Naive thymus-derived CD4-positive, alpha-beta T cell (primary cell): ENCODE measurements at regions of chr12 and their contacts with region 1.

Region 1: GRCh38 chr12:56041552-56042429 is at the start of gene RPS26:
- DNase-seq: peak; percentile 75 to 97 (median 94)
- ATAC-seq: peak; percentile 94
- H3K4me3 ChIP-seq: peak within 1 kb of the TSS; percentile 100
- H3K4me3 Mint-ChIP-seq: peak within 1 kb of the TSS; percentile 91 to 100 (median 98)
- H3K27ac ChIP-seq: peak within 1 kb of the TSS; percentile 84
- H3K27ac Mint-ChIP-seq: peak within 1 kb of the TSS; percentile 94 to 99 (median 97)
- H3K4me1 ChIP-seq: peaks cover 16 to 19% of the 10 kb centered on the region in 2 donors
- H3K4me1 Mint-ChIP-seq: peaks cover 14 to 56% (median 34%) of the 10 kb centered on the region in 7 donors
- H3K27me3 ChIP-seq: no peaks in the 10 kb centered on the region
- H3K27me3 Mint-ChIP-seq: no peaks in the 10 kb centered on the region
- total RNA-seq, gene RPS26: 40.8 to 64.5 (median 46.4) TPM

Region 2: DNA sequence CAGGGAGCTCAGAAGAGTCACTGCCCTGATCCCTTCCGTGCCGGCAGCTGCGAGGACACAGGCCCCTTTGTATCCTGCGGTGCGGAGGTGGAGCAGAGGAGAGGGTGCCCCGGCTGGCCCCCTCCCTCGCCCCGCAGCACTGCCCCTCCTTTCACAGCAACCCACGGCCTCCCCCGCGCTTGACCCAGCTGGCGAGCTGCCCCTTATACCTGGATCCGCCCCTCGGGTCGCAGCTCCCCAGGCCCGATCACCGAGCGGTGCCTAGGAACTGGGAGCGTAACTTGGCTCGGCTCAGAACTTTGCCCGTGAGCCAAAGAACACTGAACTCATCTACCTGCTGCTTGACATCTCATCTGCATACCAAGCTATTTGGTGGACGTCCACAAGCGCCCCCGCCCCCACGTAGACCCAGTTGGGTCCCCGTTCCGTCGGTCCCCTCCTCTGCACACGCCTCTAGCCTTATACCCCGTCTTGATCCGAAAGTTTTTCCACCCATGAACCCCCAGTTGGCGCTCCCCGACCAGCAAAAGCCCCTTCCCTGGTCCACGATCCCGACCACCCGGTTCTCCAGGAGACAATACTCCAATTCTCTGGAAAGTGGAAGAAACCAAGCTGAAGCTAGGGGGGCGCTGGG is 211.7 kb before region 1 on chr12:
- CTCF ChIA-PET with region 1: no interaction called
- POLR2A ChIA-PET with region 1: no interaction called
- intact Hi-C with region 1: loop called (anchors 1 kb)
- DNase-seq: peak in 5 of 9 donors; percentile 16 to 44 (median 20)
- ATAC-seq: peak; percentile 2
- H3K4me3 ChIP-seq: peak overlapping the region; percentile 99
- H3K4me3 Mint-ChIP-seq: peak overlapping the region; percentile 88 to 99 (median 99)
- H3K27ac ChIP-seq: peak overlapping the region; percentile 84
- H3K27ac Mint-ChIP-seq: peak overlapping the region; percentile 85 to 98 (median 95)
- H3K4me1 ChIP-seq: peaks cover 37 to 40% of the 10 kb centered on the region in 2 donors
- H3K4me1 Mint-ChIP-seq: peaks cover 42 to 69% (median 53%) of the 10 kb centered on the region in 7 donors
- H3K27me3 ChIP-seq: no peaks in the 10 kb centered on the region
- H3K27me3 Mint-ChIP-seq: no peaks in the 10 kb centered on the region

Region 3: DNA sequence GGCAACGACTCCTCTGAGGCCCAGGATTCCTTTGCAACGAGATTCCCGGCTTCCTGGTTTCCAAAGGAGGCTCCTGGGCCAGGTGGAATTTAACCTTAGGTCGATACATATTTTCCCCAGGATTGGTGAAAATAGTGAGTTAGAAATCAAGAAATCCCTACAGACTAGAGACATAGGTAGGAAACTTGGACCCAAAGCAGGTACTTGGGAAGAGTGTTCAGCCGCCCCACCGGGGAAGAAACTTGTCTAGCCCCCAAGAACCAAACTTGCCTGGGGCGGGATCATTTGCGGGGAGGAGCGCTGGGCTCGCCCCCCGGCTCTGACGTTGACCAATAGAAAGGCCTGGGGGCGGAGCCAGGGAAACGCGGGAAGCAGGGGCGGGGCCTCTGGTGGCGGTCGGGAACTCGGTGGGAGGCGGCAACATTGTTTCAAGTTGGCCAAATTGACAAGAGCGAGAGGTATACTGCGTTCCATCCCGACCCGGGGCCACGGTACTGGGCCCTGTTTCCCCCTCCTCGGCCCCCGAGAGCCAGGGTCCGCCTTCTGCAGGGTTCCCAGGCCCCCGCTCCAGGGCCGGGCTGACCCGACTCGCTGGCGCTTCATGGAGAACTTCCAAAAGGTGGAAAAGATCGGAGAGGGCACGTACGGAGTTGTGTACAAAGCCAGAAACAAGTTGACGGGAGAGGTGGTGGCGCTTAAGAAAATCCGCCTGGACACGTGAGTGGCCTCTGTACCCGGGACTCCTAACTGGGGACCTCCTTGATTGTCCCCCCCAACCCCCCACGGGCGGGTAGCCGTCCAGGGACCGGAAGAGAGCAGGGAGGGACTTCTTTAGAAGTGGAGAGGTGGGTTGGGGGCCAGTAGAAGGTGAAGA is 75.1 kb before region 1 on chr12 and contains the start of gene CDK2:
- CTCF ChIA-PET with region 1: no interaction called
- POLR2A ChIA-PET with region 1: no interaction called
- intact Hi-C with region 1: no loop called
- DNase-seq: peak; percentile 70 to 95 (median 79)
- ATAC-seq: peak; percentile 99
- H3K4me3 ChIP-seq: peak within 1 kb of the TSS; percentile 73
- H3K4me3 Mint-ChIP-seq: peak within 1 kb of the TSS; percentile 88 to 97 (median 92)
- H3K27ac ChIP-seq: peak within 1 kb of the TSS; percentile 69
- H3K27ac Mint-ChIP-seq: peak within 1 kb of the TSS; percentile 61 to 94 (median 86)
- H3K4me1 ChIP-seq: peaks cover 12 to 18% of the 10 kb centered on the region in 2 donors
- H3K4me1 Mint-ChIP-seq: peaks cover 19 to 51% (median 33%) of the 10 kb centered on the region in 7 donors
- H3K27me3 ChIP-seq: no peaks in the 10 kb centered on the region
- H3K27me3 Mint-ChIP-seq: no peaks in the 10 kb centered on the region
- total RNA-seq, gene CDK2: 19.0 to 77.2 (median 24.1) TPM

Region 4: DNA sequence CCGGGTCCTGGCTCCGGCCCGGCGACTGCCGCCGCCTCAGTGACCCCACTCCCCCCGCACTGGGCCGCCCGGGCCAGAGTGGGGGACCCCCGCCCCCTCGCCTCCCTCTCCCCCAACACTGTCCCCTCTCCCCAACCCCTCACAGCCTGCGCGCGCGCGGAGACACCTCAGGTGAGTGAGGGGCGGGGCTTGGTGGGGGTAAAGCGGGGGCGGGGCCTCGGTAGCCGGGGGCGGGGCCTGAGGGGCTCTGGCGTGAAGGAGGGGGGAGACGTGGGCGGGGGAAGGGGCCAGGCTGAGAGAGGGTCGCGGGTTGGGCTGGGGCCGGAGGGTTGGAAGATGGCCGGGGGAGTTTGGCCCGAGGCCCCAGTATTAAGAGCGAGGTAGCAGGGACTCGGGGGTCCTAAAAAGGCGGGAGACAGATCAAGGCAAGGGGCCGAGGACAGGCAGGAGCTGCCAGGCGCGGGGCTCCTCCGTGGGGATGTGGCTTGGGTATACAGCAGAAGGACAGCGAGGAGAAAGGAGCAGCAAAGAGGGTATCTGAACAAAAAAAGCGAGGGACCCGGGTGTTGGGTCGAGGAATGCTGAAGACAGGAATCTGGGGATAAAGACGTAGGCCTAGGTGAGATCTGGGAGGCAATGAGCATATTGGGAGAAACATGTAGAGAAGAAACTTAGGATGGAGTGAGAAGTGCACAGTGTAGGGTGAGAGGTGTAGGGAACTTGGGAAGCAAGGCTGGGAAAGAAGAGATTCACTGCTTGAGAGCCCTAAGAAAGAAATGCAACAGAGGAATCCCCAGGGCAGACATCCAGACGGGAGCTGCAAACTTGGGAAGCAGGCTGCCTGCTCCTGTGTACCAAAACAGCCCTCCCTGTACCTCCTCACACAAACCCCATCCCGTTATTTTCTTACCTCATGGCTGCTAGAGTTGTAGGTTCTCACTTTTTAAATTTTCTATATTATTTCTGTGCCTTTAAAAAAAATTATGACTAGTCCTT is 33.9 kb before region 1 on chr12:
- CTCF ChIA-PET with region 1: no interaction called
- POLR2A ChIA-PET with region 1: interaction called, 6 read pairs
- intact Hi-C with region 1: loop called in 1 of 2 experiments (anchors 2 kb)
- DNase-seq: peak; percentile 38 to 72 (median 63)
- ATAC-seq: peak; percentile 91
- H3K4me3 ChIP-seq: peak overlapping the region; percentile 57
- H3K4me3 Mint-ChIP-seq: peak overlapping the region; percentile 80 to 94 (median 88)
- H3K27ac ChIP-seq: peak overlapping the region; percentile 69
- H3K27ac Mint-ChIP-seq: peak overlapping the region; percentile 20 to 92 (median 84)
- H3K4me1 ChIP-seq: peaks cover 10% of the 10 kb centered on the region in 2 donors
- H3K4me1 Mint-ChIP-seq: peaks cover 16 to 35% (median 29%) of the 10 kb centered on the region in 7 donors
- H3K27me3 ChIP-seq: no peaks in the 10 kb centered on the region
- H3K27me3 Mint-ChIP-seq: no peaks in the 10 kb centered on the region

Region 5: GRCh38 chr12:56078990-56079664 is 37.3 kb after region 1 on chr12:
- CTCF ChIA-PET with region 1: interaction called, 3 read pairs
- POLR2A ChIA-PET with region 1: interaction called, 3 read pairs
- intact Hi-C with region 1: loop called in 1 of 2 experiments (anchors 2 kb)
- DNase-seq: peak in 8 of 9 donors; percentile 20 to 66 (median 40)
- ATAC-seq: peak; percentile 74
- H3K4me3 ChIP-seq: peak overlapping the region; percentile 68
- H3K4me3 Mint-ChIP-seq: peak overlapping the region; percentile 80 to 91 (median 86)
- H3K27ac ChIP-seq: no peak overlapping the region
- H3K27ac Mint-ChIP-seq: peak overlapping the region in 4 of 9 donors; percentile 28 to 73 (median 50)
- H3K4me1 ChIP-seq: peaks cover 5 to 10% of the 10 kb centered on the region in 2 donors
- H3K4me1 Mint-ChIP-seq: peaks cover 0 to 16% (median 10%) of the 10 kb centered on the region in 7 donors
- H3K27me3 ChIP-seq: no peaks in the 10 kb centered on the region
- H3K27me3 Mint-ChIP-seq: peaks cover 0 to 51% (median 8%) of the 10 kb centered on the region in 5 donors

Region 6: DNA sequence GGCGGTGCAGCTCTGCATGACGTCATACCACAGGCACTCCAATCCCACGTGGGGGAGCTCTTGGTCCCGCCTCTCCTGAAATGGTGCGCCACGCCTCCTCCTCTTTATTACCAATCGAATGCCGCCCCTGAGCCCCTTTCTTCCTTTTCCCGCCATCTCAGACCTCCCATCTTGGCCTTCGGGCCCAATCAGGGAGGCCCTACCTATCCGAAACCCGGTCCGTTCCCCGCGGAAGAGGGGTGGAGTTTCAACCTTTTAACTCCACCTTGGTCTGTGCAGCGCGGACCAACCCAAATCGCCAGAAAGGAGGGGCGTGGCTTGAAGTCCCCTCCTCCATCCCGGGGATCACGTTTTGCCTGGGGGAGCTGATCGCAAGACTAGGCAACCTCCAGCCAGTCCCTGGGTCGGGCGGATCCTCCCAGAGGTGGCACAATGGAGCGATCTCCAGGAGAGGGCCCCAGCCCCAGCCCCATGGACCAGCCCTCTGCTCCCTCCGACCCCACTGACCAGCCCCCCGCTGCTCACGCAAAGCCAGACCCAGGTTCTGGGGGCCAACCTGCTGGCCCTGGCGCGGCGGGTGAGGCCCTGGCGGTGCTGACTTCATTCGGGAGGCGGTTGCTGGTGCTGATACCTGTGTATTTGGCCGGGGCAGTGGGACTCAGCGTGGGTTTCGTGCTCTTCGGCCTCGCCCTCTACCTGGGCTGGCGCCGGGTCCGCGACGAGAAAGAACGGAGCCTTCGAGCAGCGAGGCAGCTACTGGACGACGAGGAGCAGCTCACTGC is 86.3 kb after region 1 on chr12 and contains the start of gene ESYT1:
- CTCF ChIA-PET with region 1: interaction called, 5 read pairs
- POLR2A ChIA-PET with region 1: interaction called, 16 read pairs
- intact Hi-C with region 1: no loop called
- DNase-seq: peak; percentile 75 to 100 (median 98)
- ATAC-seq: peak; percentile 94
- H3K4me3 ChIP-seq: peak within 1 kb of the TSS; percentile 77
- H3K4me3 Mint-ChIP-seq: peak within 1 kb of the TSS; percentile 95 to 100 (median 98)
- H3K27ac ChIP-seq: peak within 1 kb of the TSS; percentile 84
- H3K27ac Mint-ChIP-seq: peak within 1 kb of the TSS; percentile 86 to 99 (median 91)
- H3K4me1 ChIP-seq: peaks cover 39 to 54% of the 10 kb centered on the region in 2 donors
- H3K4me1 Mint-ChIP-seq: peaks cover 40 to 76% (median 65%) of the 10 kb centered on the region in 7 donors
- H3K27me3 ChIP-seq: no peaks in the 10 kb centered on the region
- H3K27me3 Mint-ChIP-seq: no peaks in the 10 kb centered on the region
- total RNA-seq, gene ESYT1: 121 to 300 (median 221) TPM

Region 7: GRCh38 chr12:56677680-56678079 is 635.9 kb after region 1 on chr12:
- CTCF ChIA-PET with region 1: no interaction called
- POLR2A ChIA-PET with region 1: no interaction called
- intact Hi-C with region 1: no loop called
- DNase-seq: no peak
- ATAC-seq: peak; percentile 10
- H3K4me3 ChIP-seq: no peak overlapping the region
- H3K4me3 Mint-ChIP-seq: peak overlapping the region in 4 of 10 donors; percentile 42 to 63 (median 48)
- H3K27ac ChIP-seq: peak overlapping the region; percentile 34
- H3K27ac Mint-ChIP-seq: peak overlapping the region in 8 of 9 donors; percentile 50 to 87 (median 71)
- H3K4me1 ChIP-seq: peaks cover 42 to 48% of the 10 kb centered on the region in 2 donors
- H3K4me1 Mint-ChIP-seq: peaks cover 30 to 85% (median 63%) of the 10 kb centered on the region in 7 donors
- H3K27me3 ChIP-seq: no peaks in the 10 kb centered on the region
- H3K27me3 Mint-ChIP-seq: no peaks in the 10 kb centered on the region